HepG2 (cell line): ENCODE measurements at regions of chr16 and their contacts with region 1.

Region 1: DNA sequence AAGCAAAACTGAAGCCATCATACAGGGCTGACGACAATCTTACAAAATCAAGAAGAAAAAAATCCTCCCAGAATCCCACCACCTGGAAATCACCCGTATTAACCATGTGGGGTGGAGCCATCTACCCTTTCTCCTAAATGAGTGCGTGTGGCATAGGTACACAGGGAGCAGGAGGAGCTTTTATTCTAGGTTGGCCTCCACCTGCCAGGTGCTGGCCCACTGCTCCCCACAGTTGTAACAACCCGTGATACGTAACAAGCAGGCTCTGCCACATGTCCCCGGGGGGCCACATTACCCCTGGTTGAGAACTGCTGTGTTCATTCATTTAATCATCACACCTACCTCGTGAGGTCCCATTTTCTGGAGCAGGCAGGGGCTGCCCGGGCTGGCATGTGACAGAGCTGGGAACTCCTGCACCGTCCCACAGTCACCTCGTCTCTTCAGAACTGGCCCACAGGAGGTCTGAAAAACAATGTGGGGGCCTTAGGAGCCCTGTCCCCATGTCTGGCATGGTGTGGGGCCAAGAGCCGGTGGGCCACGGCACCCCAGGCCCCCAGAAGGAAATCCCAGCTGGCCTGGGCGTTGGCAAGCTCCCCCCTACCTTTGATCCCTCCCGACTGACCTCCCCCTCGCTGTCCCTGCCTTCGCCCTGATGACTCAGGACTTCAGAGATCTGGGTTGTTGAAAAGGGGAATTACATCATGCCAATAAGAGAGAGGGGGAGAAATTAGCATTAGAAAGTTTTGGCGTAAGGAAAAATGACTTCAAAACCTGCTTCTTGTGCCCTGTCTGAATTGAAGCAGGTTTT is 12.9 kb downstream of the CMIP start:
- DNase-seq: peak; percentile 89
- ATAC-seq: peak; percentile 58
- H3K4me3 ChIP-seq: peak overlapping the region in 1 of 3 experiments; percentile 42; a peak in 3 of 6 replicates
- H3K27ac ChIP-seq: peak overlapping the region; percentile 70
- H3K4me1 ChIP-seq: peaks cover 100% of the 10 kb centered on the region
- H3K27me3 ChIP-seq: no peaks in the 10 kb centered on the region
- CTCF ChIP-seq: no peak
- EP300 ChIP-seq: peak; percentile 57 to 87; a peak in 2 of 4 replicates
- POLR2A ChIP-seq: peak in 1 of 2 experiments; percentile 6; a peak in 1 of 4 replicates
- RAD21 ChIP-seq: no peak; the same call in 1 of the 2 replicates

Region 2: GRCh38 chr16:81421546-81421945 is 36.0 kb before region 1 on chr16:
- CTCF ChIA-PET with region 1: no interaction called
- POLR2A ChIA-PET with region 1: no interaction called
- in situ Hi-C with region 1: no loop called
- intact Hi-C with region 1: no loop called
- DNase-seq: no peak
- ATAC-seq: no peak
- H3K4me3 ChIP-seq: no peak overlapping the region
- H3K27ac ChIP-seq: no peak overlapping the region
- H3K4me1 ChIP-seq: peaks cover 7% of the 10 kb centered on the region; the same call in 1 of the 2 replicates
- H3K27me3 ChIP-seq: peaks cover 0 to 26% of the 10 kb centered on the region in 2 experiments; a peak in 3 of 5 replicates
- CTCF ChIP-seq: no peak
- EP300 ChIP-seq: no peak
- POLR2A ChIP-seq: no peak
- RAD21 ChIP-seq: no peak

Region 3: DNA sequence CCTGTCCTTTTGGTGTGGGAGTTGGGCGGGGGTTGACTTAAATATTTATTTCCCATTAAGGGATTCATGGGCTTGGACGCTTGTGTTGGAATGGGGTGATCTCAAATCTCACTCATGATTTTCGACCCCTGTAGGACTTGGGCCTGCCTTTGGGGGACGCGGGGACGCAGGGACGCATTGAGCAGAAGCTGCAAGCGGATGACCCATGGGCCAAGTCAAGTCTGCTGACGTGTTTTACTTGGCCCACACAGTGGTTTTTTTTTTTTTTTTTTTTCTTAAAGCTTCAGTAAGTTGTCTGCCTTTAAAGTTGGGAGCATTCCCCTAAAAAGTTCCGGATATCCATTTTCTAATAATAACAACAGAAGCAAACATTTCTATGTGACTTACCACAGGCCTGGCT is 16.0 kb after region 1 on chr16:
- CTCF ChIA-PET with region 1: no interaction called
- POLR2A ChIA-PET with region 1: interaction called, 10 read pairs
- in situ Hi-C with region 1: no loop called
- intact Hi-C with region 1: loop called (anchors 1 kb)
- DNase-seq: no peak
- ATAC-seq: no peak
- H3K4me3 ChIP-seq: no peak overlapping the region
- H3K27ac ChIP-seq: no peak overlapping the region
- H3K4me1 ChIP-seq: peaks cover 72% of the 10 kb centered on the region
- H3K27me3 ChIP-seq: no peaks in the 10 kb centered on the region
- CTCF ChIP-seq: no peak
- EP300 ChIP-seq: no peak
- POLR2A ChIP-seq: no peak
- RAD21 ChIP-seq: no peak

Region 4: DNA sequence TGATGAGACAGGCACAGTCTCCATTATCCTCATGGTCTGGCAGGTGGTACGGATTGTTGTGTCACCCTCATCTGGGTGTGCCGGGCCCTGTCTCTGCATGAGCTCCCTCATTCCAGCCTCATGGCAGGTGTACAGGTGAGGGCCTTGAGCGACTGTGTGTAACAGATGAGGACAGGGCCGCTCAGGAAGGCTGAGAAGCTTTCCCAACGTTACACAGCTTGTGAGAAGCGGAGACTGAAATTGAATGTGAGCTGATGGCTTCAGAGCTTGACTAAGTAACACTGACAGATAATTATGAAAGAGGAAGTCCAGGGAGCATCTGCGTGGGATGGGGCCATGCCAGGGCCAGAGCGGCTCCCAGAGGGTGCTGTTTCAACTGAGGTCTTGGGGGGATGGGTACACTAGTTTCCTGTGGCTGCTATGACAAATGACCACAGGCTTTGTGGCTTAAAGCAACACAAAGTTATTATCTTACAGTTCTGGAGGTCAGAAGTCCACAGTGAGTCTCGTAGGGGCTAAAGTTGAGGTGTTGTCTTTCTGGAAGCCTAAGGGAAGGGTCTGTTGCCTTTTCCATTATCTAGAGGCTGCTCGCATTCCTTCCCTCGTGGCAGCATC is 23.8 kb after region 1 on chr16:
- CTCF ChIA-PET with region 1: no interaction called
- POLR2A ChIA-PET with region 1: interaction called, 29 read pairs
- in situ Hi-C with region 1: no loop called
- intact Hi-C with region 1: no loop called
- DNase-seq: peak; percentile 94
- ATAC-seq: peak; percentile 87
- H3K4me3 ChIP-seq: peak overlapping the region in 1 of 3 experiments; percentile 32; a peak in 2 of 6 replicates
- H3K27ac ChIP-seq: peak overlapping the region; percentile 60
- H3K4me1 ChIP-seq: peaks cover 79% of the 10 kb centered on the region
- H3K27me3 ChIP-seq: no peaks in the 10 kb centered on the region
- CTCF ChIP-seq: peak; percentile 55
- EP300 ChIP-seq: peak; percentile 67 to 84
- POLR2A ChIP-seq: peak in 1 of 2 experiments; percentile 25; a peak in 2 of 4 replicates
- RAD21 ChIP-seq: peak; percentile 53; the same call in 1 of the 2 replicates

Region 5: GRCh38 chr16:81537721-81538561 is 80.4 kb after region 1 on chr16:
- CTCF ChIA-PET with region 1: no interaction called
- POLR2A ChIA-PET with region 1: interaction called, 30 read pairs
- in situ Hi-C with region 1: no loop called
- intact Hi-C with region 1: loop called (anchors 2 kb)
- DNase-seq: no peak
- ATAC-seq: no peak
- H3K4me3 ChIP-seq: no peak overlapping the region
- H3K27ac ChIP-seq: no peak overlapping the region
- H3K4me1 ChIP-seq: peaks cover 100% of the 10 kb centered on the region
- H3K27me3 ChIP-seq: no peaks in the 10 kb centered on the region
- CTCF ChIP-seq: no peak
- EP300 ChIP-seq: no peak
- POLR2A ChIP-seq: no peak
- RAD21 ChIP-seq: no peak